CD4-positive, alpha-beta T cell (primary cell): ENCODE measurements at regions of chr1 and their contacts with region 1.

Region 1: GRCh38 chr1:15046487-15047165 is 106.9 kb upstream of the TMEM51 start:
- DNase-seq: peak; percentile 7 to 64 (median 32)
- ATAC-seq: no peak
- H3K4me3 ChIP-seq: no peak overlapping the region
- H3K4me3 Mint-ChIP-seq: no peak overlapping the region
- H3K27ac ChIP-seq: no peak overlapping the region
- H3K27ac Mint-ChIP-seq: no peak overlapping the region
- H3K4me1 ChIP-seq: no peaks in the 10 kb centered on the region
- H3K4me1 Mint-ChIP-seq: no peaks in the 10 kb centered on the region
- H3K27me3 ChIP-seq: no peaks in the 10 kb centered on the region
- H3K27me3 Mint-ChIP-seq: no peaks in the 10 kb centered on the region
- CTCF ChIP-seq: peak; percentile 76

Region 2: GRCh38 chr1:13830616-13831280 is 1215.9 kb before region 1 on chr1:
- CTCF ChIA-PET with region 1: no interaction called
- POLR2A ChIA-PET with region 1: no interaction called
- intact Hi-C with region 1: loop called in 1 of 2 experiments (anchors 10 kb)
- DNase-seq: no peak
- ATAC-seq: no peak
- H3K4me3 ChIP-seq: no peak overlapping the region
- H3K4me3 Mint-ChIP-seq: no peak overlapping the region
- H3K27ac ChIP-seq: no peak overlapping the region
- H3K27ac Mint-ChIP-seq: no peak overlapping the region
- H3K4me1 ChIP-seq: peaks cover 7% of the 10 kb centered on the region
- H3K4me1 Mint-ChIP-seq: no peaks in the 10 kb centered on the region
- H3K27me3 ChIP-seq: peaks cover under 1 to 3% of the 10 kb centered on the region in 2 experiments
- H3K27me3 Mint-ChIP-seq: peaks cover 24% of the 10 kb centered on the region
- CTCF ChIP-seq: no peak

Region 3: DNA sequence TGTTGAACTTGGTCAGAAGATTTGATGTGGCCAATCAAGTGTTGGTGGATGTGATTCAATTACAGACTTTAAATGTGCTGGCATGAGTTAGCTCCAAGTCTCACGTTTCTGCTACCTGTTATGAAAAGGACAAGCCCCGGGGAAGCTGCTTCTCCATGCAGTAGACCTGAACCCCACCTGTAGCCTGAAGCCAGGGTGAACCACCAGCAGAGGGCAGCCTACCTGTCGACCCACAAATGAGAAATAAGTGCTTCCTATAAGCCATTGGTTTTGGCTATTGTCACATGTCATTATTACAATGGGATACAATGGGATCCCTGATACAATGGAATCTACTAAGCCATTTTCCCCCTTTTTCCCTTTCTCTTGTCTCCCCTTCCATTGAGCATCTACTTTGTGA is 1116.5 kb before region 1 on chr1:
- CTCF ChIA-PET with region 1: no interaction called
- POLR2A ChIA-PET with region 1: no interaction called
- intact Hi-C with region 1: loop called in 1 of 2 experiments (anchors 10 kb)
- DNase-seq: peak in 7 of 14 experiments; percentile 1 to 26 (median 2)
- ATAC-seq: no peak
- H3K4me3 ChIP-seq: no peak overlapping the region
- H3K4me3 Mint-ChIP-seq: no peak overlapping the region
- H3K27ac ChIP-seq: no peak overlapping the region
- H3K27ac Mint-ChIP-seq: no peak overlapping the region
- H3K4me1 ChIP-seq: no peaks in the 10 kb centered on the region
- H3K4me1 Mint-ChIP-seq: no peaks in the 10 kb centered on the region
- H3K27me3 ChIP-seq: peaks cover 0 to 9% of the 10 kb centered on the region in 2 experiments
- H3K27me3 Mint-ChIP-seq: peaks cover 28% of the 10 kb centered on the region
- CTCF ChIP-seq: no peak

Region 4: DNA sequence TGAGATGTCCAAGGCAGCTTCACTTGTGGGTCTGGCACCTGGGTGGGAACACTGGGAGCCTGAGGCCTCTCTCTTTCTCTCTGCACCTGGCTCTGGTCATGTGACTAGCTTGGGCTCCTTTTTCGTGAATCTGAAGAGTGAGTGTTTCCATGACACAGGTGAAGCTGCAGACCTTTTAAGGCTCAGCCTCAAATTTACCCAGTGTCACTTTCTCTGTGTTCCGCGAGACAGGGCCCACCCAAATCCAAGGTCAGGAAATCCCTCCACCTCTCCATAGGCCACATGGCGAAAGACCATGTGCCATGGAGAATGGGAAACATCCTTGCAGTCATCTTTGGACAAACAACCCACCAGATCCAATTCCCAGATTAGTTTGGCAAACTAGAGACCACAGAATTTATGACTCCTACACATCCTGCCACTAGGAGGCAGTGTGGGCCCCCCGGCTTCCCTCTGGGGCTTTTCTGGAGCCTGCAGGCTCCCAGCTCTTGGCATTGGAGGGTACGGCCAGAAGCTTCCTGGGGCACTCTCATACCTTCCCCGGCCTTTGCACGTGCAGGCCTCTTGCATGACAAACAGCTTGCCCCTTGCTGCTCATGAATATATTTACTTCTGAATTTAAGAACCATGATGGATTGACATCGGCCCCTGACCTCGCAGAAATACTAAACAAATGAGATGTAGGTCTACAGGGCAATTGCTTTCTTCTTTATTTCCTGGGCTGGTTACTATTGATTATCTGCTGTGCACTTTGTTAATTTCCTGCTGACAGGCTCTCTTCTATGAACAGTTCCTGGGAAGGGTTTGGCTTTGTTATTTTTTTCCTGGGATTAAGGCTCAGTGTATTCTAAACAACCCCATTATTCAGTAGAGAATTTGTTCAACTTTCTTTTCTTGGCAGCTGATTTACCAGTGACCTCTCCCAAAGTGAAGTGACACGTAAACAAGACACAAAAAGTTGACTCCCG is 267.4 kb before region 1 on chr1:
- CTCF ChIA-PET with region 1: no interaction called
- POLR2A ChIA-PET with region 1: no interaction called
- intact Hi-C with region 1: loop called in 1 of 2 experiments (anchors 5 kb)
- DNase-seq: peak in 6 of 14 experiments; percentile 1 to 23 (median 10)
- ATAC-seq: no peak
- H3K4me3 ChIP-seq: no peak overlapping the region
- H3K4me3 Mint-ChIP-seq: no peak overlapping the region
- H3K27ac ChIP-seq: no peak overlapping the region
- H3K27ac Mint-ChIP-seq: no peak overlapping the region
- H3K4me1 ChIP-seq: no peaks in the 10 kb centered on the region
- H3K4me1 Mint-ChIP-seq: no peaks in the 10 kb centered on the region
- H3K27me3 ChIP-seq: no peaks in the 10 kb centered on the region
- H3K27me3 Mint-ChIP-seq: no peaks in the 10 kb centered on the region
- CTCF ChIP-seq: peak; percentile 40

Region 5: DNA sequence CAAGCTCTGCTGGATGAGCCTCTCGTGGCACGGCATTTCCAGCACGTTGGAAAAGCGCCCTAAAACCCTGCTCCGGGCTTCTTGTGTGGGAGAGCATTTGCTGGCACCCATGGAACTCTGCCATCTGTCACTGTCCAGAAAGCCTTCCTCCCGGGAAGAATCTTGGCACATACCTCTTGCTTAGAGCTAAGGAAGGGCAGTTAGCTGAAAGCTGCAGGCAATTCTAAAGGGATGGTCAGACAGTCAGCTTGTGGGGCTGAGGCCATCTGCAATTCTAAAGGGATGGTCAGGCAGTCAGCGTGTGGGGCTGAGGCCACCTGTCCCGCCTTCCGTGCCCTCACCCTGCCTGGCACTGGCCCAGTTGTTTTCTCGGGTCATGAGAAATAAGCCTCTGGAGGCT is 32.1 kb before region 1 on chr1:
- CTCF ChIA-PET with region 1: no interaction called
- POLR2A ChIA-PET with region 1: no interaction called
- intact Hi-C with region 1: no loop called
- DNase-seq: no peak
- ATAC-seq: no peak
- H3K4me3 ChIP-seq: no peak overlapping the region
- H3K4me3 Mint-ChIP-seq: no peak overlapping the region
- H3K27ac ChIP-seq: no peak overlapping the region
- H3K27ac Mint-ChIP-seq: no peak overlapping the region
- H3K4me1 ChIP-seq: no peaks in the 10 kb centered on the region
- H3K4me1 Mint-ChIP-seq: no peaks in the 10 kb centered on the region
- H3K27me3 ChIP-seq: no peaks in the 10 kb centered on the region
- H3K27me3 Mint-ChIP-seq: no peaks in the 10 kb centered on the region
- CTCF ChIP-seq: no peak

Region 6: GRCh38 chr1:15168479-15168878 is 121.9 kb after region 1 on chr1:
- CTCF ChIA-PET with region 1: no interaction called
- POLR2A ChIA-PET with region 1: no interaction called
- intact Hi-C with region 1: no loop called
- DNase-seq: peak in 2 of 14 experiments; percentile 37 to 53
- ATAC-seq: no peak
- H3K4me3 ChIP-seq: no peak overlapping the region
- H3K4me3 Mint-ChIP-seq: no peak overlapping the region
- H3K27ac ChIP-seq: no peak overlapping the region
- H3K27ac Mint-ChIP-seq: no peak overlapping the region
- H3K4me1 ChIP-seq: no peaks in the 10 kb centered on the region
- H3K4me1 Mint-ChIP-seq: no peaks in the 10 kb centered on the region
- H3K27me3 ChIP-seq: no peaks in the 10 kb centered on the region
- H3K27me3 Mint-ChIP-seq: peaks cover 29% of the 10 kb centered on the region
- CTCF ChIP-seq: no peak